Activated CD4-positive, alpha-beta memory T cell treated with anti-CD3 and anti-CD28 coated beads for 36 hours (primary cell): ENCODE measurements at regions of chr22 and their contacts with region 1.

Region 1: DNA sequence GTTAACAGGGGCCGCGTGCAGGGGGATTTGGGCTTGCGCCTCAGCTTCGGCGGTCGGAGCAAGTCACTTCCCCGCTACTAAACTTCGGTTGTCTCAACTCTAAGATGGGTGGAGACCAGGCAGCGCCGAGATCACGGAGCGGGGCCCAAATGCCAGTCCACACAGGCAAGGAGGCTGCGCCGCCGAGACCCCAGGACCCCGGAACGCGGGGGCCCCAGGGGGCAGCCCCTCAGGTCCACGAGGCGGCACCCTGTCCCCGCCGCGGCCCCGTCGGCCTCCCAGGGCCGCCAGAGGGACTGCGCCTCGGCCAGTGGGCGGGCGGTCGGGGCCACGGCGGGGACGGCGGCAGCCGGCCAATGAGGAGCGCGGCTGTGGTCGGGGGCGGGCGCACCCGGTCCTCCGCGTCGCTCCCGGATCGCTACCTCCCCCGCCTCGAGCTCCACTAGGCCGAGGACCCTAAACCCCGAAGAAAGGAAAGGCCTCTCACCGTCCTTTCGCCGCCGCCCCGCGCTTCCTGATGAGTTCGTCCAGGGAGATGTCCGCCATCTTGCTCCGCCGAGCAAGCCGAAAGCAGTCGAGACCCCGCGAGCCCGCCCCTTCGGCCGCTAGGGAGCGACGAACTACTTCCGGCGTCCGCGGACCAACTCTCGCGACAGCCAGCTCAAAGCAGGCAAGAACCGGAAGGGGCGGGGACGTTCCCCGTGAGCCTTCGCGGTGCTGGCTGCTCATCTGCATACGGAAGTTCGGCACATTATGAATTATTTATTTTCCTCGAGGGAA is at the start of gene POLDIP3:
- DNase-seq: peak; percentile 99
- H3K4me3 Mint-ChIP-seq: peak within 1 kb of the TSS; percentile 94
- H3K27ac Mint-ChIP-seq: peak within 1 kb of the TSS; percentile 96
- H3K4me1 Mint-ChIP-seq: peaks cover 49% of the 10 kb centered on the region
- H3K27me3 Mint-ChIP-seq: peaks cover 3% of the 10 kb centered on the region
- total RNA-seq, gene POLDIP3: 64.6 to 75.3 TPM

Region 2: GRCh38 chr22:42581762-42582716 is 32.5 kb before region 1 on chr22:
- CTCF ChIA-PET with region 1: interaction called, 3 read pairs
- POLR2A ChIA-PET with region 1: interaction called, 32 read pairs
- intact Hi-C with region 1: loop called (anchors 2 kb)
- DNase-seq: peak; percentile 92
- H3K4me3 Mint-ChIP-seq: peak overlapping the region; percentile 96
- H3K27ac Mint-ChIP-seq: peak overlapping the region; percentile 79
- H3K4me1 Mint-ChIP-seq: peaks cover 13% of the 10 kb centered on the region
- H3K27me3 Mint-ChIP-seq: no peaks in the 10 kb centered on the region

Region 3: GRCh38 chr22:42626951-42627625 is 12.6 kb after region 1 on chr22:
- CTCF ChIA-PET with region 1: interaction called, 5 read pairs
- POLR2A ChIA-PET with region 1: interaction called, 11 read pairs
- intact Hi-C with region 1: no loop called
- DNase-seq: no peak
- H3K4me3 Mint-ChIP-seq: no peak overlapping the region
- H3K27ac Mint-ChIP-seq: no peak overlapping the region
- H3K4me1 Mint-ChIP-seq: no peaks in the 10 kb centered on the region
- H3K27me3 Mint-ChIP-seq: no peaks in the 10 kb centered on the region

Region 4: GRCh38 chr22:42649246-42650099 is 35.0 kb after region 1 on chr22 and contains the start of gene CYB5R3:
- CTCF ChIA-PET with region 1: no interaction called
- POLR2A ChIA-PET with region 1: interaction called, 45 read pairs
- intact Hi-C with region 1: loop called (anchors 2 kb)
- DNase-seq: peak; percentile 88
- H3K4me3 Mint-ChIP-seq: peak within 1 kb of the TSS; percentile 89
- H3K27ac Mint-ChIP-seq: peak within 1 kb of the TSS; percentile 78
- H3K4me1 Mint-ChIP-seq: peaks cover 20% of the 10 kb centered on the region
- H3K27me3 Mint-ChIP-seq: no peaks in the 10 kb centered on the region
- total RNA-seq, gene CYB5R3: 73.7 to 77.6 TPM